Right cardiac atrium (tissue), 5 donors: ENCODE measurements at regions of chr18 and their contacts with region 1.

Region 1: DNA sequence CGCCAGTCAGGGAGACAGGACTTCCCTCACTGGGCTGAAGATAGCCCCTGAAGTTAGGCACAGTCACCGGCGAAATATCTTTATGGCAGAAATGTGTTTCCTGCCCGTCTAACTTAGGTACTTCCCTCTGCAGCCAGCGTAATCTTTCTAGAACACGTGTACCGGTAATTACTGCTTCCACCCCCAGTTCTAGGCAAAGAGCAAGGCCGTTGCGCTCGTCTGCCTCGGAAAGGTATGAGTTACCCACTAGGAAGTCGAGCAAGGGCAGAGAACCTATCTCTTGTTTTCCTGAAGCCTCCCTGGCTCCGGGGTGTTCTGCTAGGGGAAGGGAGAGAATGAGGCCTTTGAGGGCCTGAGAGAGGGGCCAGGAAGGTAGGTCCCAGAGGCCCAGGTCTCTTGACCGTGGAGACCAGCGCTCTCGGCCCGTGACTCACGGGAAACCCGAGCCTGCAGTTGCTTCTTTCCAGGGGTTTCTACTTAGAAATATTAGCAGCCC is 70.0 kb downstream of the TWSG1 start:
- DNase-seq: peak in 1 of 3 donors; percentile 46
- ATAC-seq: peak; percentile 87 to 98
- H3K4me3 ChIP-seq: peak overlapping the region; percentile 27
- H3K27ac ChIP-seq: no peak overlapping the region
- H3K4me1 ChIP-seq: no peaks in the 10 kb centered on the region
- H3K27me3 ChIP-seq: no peaks in the 10 kb centered on the region

Region 2: GRCh38 chr18:9466846-9467245 is 62.2 kb after region 1 on chr18:
- intact Hi-C with region 1: loop called in 1 of 4 experiments (anchors 10 kb)
- DNase-seq: no peak
- ATAC-seq: no peak
- H3K4me3 ChIP-seq: no peak overlapping the region
- H3K27ac ChIP-seq: no peak overlapping the region
- H3K4me1 ChIP-seq: no peaks in the 10 kb centered on the region
- H3K27me3 ChIP-seq: no peaks in the 10 kb centered on the region

Region 3: GRCh38 chr18:9506046-9506792 is 101.6 kb after region 1 on chr18:
- intact Hi-C with region 1: no loop called
- DNase-seq: no peak
- ATAC-seq: peak in 1 of 2 donors; percentile 71
- H3K4me3 ChIP-seq: no peak overlapping the region
- H3K27ac ChIP-seq: no peak overlapping the region
- H3K4me1 ChIP-seq: peaks cover 3% of the 10 kb centered on the region
- H3K27me3 ChIP-seq: no peaks in the 10 kb centered on the region